Breast epithelium (tissue), 4 donors: ENCODE measurements at regions of chr13 and their contacts with region 1.

Region 1: GRCh38 chr13:113225515-113225914 is 16.1 kb downstream of the CUL4A start:
- DNase-seq: no peak
- H3K4me3 ChIP-seq: no peak overlapping the region
- H3K27ac ChIP-seq: no peak overlapping the region
- H3K4me1 ChIP-seq: no peaks in the 10 kb centered on the region
- H3K27me3 ChIP-seq: no peaks in the 10 kb centered on the region
- CTCF ChIP-seq: no peak
- POLR2A ChIP-seq: no peak

Region 2: DNA sequence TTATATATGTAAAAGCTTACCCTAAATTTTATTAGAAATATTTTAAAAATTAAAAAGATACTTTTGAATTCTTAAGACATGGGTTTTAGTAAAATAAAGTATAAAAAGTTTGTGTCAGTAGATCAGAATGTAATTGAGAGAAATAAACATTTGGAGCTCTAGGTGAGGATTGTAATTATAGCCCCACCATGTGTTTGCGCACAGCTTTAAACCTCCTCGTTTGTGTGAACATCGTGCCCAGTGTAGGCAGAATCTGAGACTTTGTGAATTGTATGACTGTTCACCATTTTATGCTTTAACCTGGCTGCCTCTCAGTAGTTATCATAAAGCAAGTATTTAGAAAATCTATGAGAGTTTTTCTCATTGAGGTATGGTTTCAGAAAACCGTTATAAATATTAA is 13.0 kb after region 1 on chr13:
- intact Hi-C with region 1: loop called (anchors 1 kb)
- DNase-seq: no peak
- H3K4me3 ChIP-seq: no peak overlapping the region
- H3K27ac ChIP-seq: no peak overlapping the region
- H3K4me1 ChIP-seq: no peaks in the 10 kb centered on the region
- H3K27me3 ChIP-seq: no peaks in the 10 kb centered on the region
- CTCF ChIP-seq: no peak
- POLR2A ChIP-seq: no peak